Psoas muscle (tissue), 8 donors: ENCODE measurements at regions of chr11 and their contacts with region 1.

Region 1: DNA sequence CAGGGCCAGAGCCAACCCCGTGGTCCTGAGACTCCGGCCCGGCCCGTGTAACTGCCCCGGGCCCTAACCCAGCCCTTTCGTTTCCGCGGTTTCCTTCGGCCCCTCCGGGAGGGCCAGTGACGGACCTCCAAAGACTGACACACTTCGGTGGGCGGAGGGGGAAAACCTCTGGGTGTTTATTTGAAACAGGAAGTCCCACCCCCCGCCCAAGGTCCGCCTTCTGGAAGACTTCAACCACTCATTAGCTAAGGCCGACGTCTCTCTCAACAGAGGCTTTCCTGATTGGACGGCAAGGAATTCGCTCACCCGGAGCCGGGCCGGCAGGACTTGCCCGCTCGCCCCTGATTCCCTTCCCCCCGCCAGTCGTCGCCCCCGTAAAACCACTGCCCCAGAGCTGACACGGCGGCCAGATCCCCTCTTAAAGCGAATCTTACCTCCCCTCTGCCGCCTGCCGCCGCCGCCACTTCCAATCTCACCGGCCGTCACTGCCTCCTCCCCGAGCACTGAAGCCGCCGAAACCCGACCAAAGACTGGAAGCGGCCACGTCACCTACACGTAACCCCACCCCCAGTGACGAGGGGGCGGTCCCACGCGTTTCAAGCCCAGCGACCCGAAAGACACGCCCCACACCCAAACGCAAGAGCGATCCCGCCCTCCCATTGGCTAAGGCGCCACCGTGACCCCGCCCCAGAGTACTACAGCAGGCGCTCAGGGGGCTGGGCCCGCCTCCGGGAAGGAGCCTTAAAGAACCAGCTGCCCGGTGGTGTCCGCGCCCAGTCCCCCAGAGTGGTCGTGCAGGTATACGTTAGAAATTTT is at the start of gene STX5:
- DNase-seq: peak; percentile 100
- ATAC-seq: peak; percentile 98 to 99 (median 98)
- H3K4me3 ChIP-seq: peak within 1 kb of the TSS; percentile 99
- H3K27ac ChIP-seq: peak within 1 kb of the TSS; percentile 98
- H3K4me1 ChIP-seq: peaks cover 27% of the 10 kb centered on the region
- H3K27me3 ChIP-seq: no peaks in the 10 kb centered on the region
- CTCF ChIP-seq: no peak
- total RNA-seq, gene STX5: 16.0 to 24.6 (median 20.7) TPM

Region 2: DNA sequence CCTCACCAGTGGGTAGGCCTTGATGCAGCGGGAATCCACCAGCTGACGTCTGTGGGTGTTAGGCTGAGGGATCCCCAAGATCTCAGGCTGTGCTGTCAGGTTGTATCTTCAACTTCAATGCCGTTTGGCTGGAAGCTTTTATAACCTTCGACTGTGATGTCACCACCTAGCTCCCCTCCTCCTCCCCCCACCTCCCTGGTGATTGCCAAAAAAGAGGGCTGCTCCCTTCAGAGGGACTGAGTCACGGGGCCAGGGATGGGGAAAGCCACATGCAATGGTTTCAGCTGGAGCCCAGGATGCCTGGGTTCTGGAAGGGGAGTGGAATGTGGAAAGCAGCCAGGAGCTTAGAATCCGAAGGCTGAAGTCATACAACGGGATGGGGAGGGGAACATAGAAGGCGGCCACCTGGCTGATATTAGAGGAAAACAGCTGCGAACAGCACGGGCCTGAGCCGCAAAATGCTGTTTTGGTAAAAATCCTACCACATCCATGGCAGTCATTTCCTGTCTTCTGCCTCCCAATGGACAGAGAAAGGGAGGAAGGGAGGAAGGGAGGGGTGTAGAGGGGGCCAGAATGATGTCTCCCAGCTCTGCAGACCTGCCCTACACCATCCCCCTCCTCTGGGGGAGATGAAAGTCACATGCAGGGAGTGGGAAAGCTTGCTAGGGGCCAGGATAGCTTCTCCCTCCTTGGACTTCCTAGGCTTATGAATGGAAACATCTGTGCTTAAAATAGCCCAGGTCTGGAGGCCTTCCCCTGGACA is 142.1 kb before region 1 on chr11 and contains the start of gene LRRN4CL:
- intact Hi-C with region 1: no loop called
- DNase-seq: peak; percentile 90 to 92
- ATAC-seq: peak; percentile 64 to 80 (median 78)
- H3K4me3 ChIP-seq: peak within 1 kb of the TSS; percentile 43
- H3K27ac ChIP-seq: peak within 1 kb of the TSS; percentile 53
- H3K4me1 ChIP-seq: peaks cover 5% of the 10 kb centered on the region
- H3K27me3 ChIP-seq: no peaks in the 10 kb centered on the region
- CTCF ChIP-seq: no peak
- total RNA-seq, gene LRRN4CL: 2.4 to 4.8 (median 3.8) TPM

Region 3: DNA sequence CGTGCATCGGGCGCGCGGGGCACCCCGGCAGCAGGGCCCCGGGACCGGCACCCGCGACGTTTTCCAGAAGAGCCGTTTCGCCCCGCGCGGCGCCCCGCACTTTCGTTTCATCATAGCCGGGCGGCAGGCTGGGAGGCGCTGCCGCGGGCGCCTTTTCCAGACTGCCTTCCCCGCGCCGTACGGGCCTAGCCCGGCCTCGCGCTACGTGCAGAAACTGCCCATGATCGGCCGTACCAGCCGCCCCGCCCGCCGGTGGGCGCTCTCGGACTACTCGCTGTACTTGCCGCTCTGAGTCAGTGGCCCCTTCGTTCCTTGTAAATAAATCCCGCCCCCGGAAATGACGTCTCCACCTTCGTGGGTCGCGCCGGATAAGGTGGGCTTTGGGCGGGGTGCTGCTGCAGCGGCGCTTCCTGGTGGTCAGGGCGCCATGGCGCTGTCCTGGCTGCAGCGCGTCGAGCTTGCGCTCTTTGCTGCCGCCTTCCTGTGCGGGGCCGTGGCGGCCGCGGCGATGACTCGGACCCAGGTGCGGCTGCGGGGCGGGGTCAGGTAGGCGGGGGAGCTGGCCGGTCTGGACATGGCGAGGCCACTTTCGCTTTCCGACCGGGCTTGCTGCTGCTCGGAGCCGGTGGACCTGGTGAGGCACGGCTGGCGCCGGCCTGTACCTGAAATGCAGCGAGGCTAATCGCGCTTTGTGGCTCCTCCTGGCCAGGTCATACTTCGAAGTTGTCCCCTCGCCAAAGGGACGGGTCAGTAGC is 44.5 kb before region 1 on chr11 and contains the start of gene TMEM179B:
- intact Hi-C with region 1: loop called in 1 of 2 experiments (anchors 5 kb)
- DNase-seq: peak; percentile 97 to 98
- ATAC-seq: peak; percentile 89 to 91 (median 90)
- H3K4me3 ChIP-seq: peak within 1 kb of the TSS; percentile 97
- H3K27ac ChIP-seq: peak within 1 kb of the TSS; percentile 99
- H3K4me1 ChIP-seq: peaks cover 34% of the 10 kb centered on the region
- H3K27me3 ChIP-seq: no peaks in the 10 kb centered on the region
- CTCF ChIP-seq: peak; percentile 39
- total RNA-seq, gene TMEM179B: 12.2 to 18.5 (median 16.0) TPM

Region 4: GRCh38 chr11:62799486-62799885 is 32.2 kb before region 1 on chr11:
- intact Hi-C with region 1: loop called (anchors 5 kb)
- DNase-seq: no peak
- ATAC-seq: no peak
- H3K4me3 ChIP-seq: no peak overlapping the region
- H3K27ac ChIP-seq: no peak overlapping the region
- H3K4me1 ChIP-seq: peaks cover 11% of the 10 kb centered on the region
- H3K27me3 ChIP-seq: no peaks in the 10 kb centered on the region
- CTCF ChIP-seq: no peak